T-cell (primary cell): ENCODE measurements at regions of chr3 and their contacts with region 1.

Region 1: GRCh38 chr3:94234177-94234788 is 171.4 kb downstream of the NSUN3 start:
- DNase-seq: no peak
- ATAC-seq: no peak
- H3K4me3 ChIP-seq: no peak overlapping the region
- H3K4me3 Mint-ChIP-seq: no peak overlapping the region
- H3K27ac ChIP-seq: no peak overlapping the region
- H3K27ac Mint-ChIP-seq: no peak overlapping the region
- H3K4me1 ChIP-seq: no peaks in the 10 kb centered on the region
- H3K4me1 Mint-ChIP-seq: no peaks in the 10 kb centered on the region
- H3K27me3 ChIP-seq: no peaks in the 10 kb centered on the region
- H3K27me3 Mint-ChIP-seq: peaks cover 0 to 3% of the 10 kb centered on the region in 2 donors

Region 2: DNA sequence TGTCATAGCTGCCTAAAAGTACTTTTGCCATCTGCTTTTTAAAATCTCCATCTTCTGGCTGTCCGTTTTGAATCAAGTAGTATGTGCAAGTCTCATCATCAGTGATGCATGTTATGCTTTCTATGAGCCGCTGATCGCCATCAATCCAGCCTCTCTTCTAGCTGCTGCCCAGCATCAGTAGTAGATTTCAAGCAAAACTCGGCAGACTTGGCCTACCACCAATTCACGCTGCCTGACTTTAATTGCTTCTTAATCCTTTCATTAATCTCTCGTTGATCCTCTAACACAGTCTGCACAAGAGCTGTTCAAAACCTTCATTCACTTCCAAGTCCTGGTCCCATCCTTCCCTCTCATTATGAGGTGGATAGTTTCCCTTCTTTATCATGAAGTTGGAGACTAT is 66.5 kb before region 1 on chr3:
- CTCF ChIA-PET with region 1: no interaction called
- POLR2A ChIA-PET with region 1: no interaction called
- DNase-seq: no peak
- ATAC-seq: no peak
- H3K4me3 ChIP-seq: no peak overlapping the region
- H3K4me3 Mint-ChIP-seq: no peak overlapping the region
- H3K27ac ChIP-seq: no peak overlapping the region
- H3K27ac Mint-ChIP-seq: no peak overlapping the region
- H3K4me1 ChIP-seq: no peaks in the 10 kb centered on the region
- H3K4me1 Mint-ChIP-seq: no peaks in the 10 kb centered on the region
- H3K27me3 ChIP-seq: no peaks in the 10 kb centered on the region
- H3K27me3 Mint-ChIP-seq: peaks cover 0 to 3% of the 10 kb centered on the region in 2 donors

Region 3: DNA sequence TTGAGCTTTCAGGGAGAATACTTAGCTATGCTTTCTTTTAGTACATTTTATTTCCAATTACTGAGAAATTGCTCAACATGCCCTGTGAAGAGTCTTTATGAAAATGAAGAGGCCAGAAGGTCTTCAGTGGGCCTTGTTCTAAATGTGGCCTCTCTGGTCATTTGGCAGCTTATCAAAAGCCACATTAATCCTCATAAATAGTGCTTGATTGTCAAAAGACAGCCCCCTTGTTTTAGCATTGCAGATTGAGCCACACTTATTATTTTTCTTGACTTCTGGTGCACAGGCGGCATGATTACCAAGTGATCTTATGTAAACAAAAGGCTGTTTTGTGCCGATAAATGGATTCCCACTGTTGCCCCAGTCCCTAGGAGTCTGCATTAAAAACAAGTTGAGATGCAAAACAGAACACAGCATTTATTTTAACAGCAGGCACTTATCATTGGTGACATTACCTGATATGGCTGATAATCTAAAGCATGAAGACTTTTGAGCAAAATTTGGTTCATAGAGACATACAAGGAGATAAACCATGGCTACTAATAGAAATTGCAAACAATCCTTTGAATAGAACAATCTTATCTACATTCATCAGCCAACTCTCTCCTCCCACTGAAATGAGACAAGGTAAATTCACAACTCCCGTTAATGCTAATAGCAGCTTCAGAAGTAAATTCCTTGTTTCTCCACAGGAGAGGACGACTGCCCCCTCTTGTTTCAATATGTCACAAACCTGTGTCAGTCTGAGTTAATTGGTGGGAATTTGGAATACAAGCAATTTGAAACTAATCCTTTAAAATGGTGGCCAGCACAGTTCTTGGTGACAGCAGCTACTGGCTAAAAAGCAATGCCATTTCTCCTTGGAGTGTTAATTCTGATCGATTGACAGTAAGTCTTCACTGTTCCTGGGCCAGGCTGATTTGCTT is 22.9 kb after region 1 on chr3:
- CTCF ChIA-PET with region 1: no interaction called
- POLR2A ChIA-PET with region 1: interaction called in 1 of 2 experiments, 12 read pairs
- DNase-seq: no peak
- ATAC-seq: no peak
- H3K4me3 ChIP-seq: no peak overlapping the region
- H3K4me3 Mint-ChIP-seq: no peak overlapping the region
- H3K27ac ChIP-seq: no peak overlapping the region
- H3K27ac Mint-ChIP-seq: no peak overlapping the region
- H3K4me1 ChIP-seq: no peaks in the 10 kb centered on the region
- H3K4me1 Mint-ChIP-seq: no peaks in the 10 kb centered on the region
- H3K27me3 ChIP-seq: no peaks in the 10 kb centered on the region
- H3K27me3 Mint-ChIP-seq: peaks cover 5 to 9% of the 10 kb centered on the region in 2 donors